Left colon (tissue), 2 donors: ENCODE measurements at regions of chr3 and their contacts with region 1.

Region 1: DNA sequence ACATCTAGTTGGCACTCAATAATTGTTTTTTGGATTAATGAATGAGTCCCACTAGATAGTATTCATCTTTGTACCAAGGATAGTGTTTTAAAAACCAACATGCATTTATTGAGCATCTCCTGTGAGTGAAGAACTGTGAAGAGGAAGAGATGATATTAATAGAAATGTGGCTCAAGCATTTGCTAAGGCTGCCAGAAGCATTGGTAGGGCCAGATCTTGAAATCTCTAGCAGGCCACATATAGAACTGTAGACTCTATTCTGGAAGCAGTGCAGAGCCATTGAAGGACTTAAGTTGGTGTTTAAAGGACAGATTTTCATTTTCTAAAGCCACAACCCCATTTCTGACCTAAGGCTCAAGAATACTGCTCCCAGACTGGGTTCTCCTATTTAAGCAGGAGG is 99.0 kb downstream of the NEK11 start:
- DNase-seq: no peak
- ATAC-seq: no peak

Region 2: DNA sequence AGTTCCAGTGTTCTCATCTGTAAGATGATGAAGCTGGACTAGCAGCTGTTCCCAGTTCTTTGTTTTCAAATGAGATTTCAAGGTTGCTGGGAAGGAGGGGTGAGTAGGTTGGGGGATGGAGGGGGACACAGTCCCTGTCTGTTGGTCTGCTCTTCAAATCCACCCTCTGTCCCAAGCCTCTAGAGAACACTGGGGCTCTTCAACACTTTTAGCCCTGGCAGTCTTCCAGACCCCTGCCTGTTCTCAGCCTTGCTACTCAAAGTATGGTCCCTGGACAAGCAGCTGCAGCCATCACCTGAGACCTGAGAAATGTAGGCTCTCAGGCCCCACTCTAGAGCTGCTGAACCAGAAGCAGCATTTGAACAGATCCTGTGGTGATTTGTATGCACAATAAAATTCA is 57.7 kb before region 1 on chr3:
- intact Hi-C with region 1: loop called in 1 of 2 experiments (anchors 10 kb)
- DNase-seq: no peak
- ATAC-seq: no peak

Region 3: GRCh38 chr3:131260525-131260924 is 134.8 kb after region 1 on chr3:
- intact Hi-C with region 1: no loop called
- DNase-seq: no peak
- ATAC-seq: no peak